Posterior vena cava (tissue), 2 donors: ENCODE measurements at regions of chr11 and their contacts with region 1.

Region 1: DNA sequence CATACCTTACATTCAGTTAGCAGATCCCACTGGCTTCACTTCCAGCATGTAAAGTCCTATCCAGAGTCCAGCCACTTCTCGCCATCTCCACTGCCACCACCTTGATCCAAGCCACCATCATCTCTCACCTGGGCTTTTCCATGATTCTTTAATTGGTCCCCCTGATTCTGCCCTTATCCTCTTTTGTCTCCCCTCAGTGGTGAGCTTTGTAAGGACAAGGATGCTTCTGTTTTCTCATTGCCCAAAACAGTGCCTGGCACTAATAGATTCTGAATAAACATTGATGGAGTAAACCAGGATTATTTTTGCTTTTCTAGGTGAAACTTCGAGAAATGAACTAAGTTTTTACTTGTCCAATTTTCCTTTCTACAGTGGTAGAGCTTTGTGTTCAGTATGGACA is 4.4 kb downstream of the POLA2 start:
- DNase-seq: no peak

Region 2: GRCh38 chr11:65213322-65214211 is 52.6 kb before region 1 on chr11:
- intact Hi-C with region 1: no loop called
- DNase-seq: peak; percentile 80

Region 3: DNA sequence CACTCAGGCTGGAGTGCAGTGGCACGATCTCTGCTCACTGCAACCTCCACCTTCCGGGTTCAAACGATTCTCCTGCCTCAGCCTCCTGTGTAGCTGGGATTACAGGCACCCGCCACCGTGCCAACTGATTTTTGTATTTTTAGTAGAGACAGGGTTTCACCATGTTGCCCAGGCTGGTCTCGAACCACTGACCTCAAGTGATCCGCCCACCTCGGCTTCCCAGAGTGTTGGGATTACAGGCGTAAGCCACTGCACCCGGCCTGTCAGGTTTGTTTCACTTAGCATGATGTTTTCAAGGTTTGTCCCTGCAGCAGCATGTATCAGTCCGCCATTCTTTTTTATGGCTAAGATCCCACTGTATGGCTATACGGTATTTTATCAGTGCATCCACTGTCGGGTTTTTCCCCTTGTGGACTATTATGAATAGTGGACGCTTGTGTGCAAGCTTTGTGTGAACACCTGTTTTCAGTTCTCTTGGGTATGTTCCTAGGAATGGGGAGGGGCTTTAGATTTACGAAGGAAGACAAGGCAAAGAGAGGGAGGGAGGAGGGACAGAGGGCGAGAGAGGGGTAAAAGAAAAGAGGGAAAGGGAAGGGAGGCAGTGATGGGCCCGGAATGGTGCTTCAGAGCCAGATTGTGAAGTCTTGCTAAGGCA is 34.5 kb after region 1 on chr11:
- intact Hi-C with region 1: loop called in 1 of 2 experiments (anchors 1 kb)
- DNase-seq: peak; percentile 62

Region 4: GRCh38 chr11:65378221-65378907 is 112.2 kb after region 1 on chr11:
- intact Hi-C with region 1: no loop called
- DNase-seq: no peak